GM12878 (cell line): ENCODE measurements at regions of chr7 and their contacts with region 1.

Region 1: GRCh38 chr7:137656227-137656849 is 190.4 kb downstream of the DGKI start:
- DNase-seq: peak; percentile 20
- ATAC-seq: peak; percentile 90
- H3K4me3 ChIP-seq: no peak overlapping the region
- H3K27ac ChIP-seq: no peak overlapping the region
- H3K4me1 ChIP-seq: no peaks in the 10 kb centered on the region
- H3K27me3 ChIP-seq: no peaks in the 10 kb centered on the region
- CTCF ChIP-seq: peak; percentile 74 to 86 (median 83)
- EP300 ChIP-seq: no peak
- POLR2A ChIP-seq: no peak
- RAD21 ChIP-seq: peak; percentile 96

Region 2: GRCh38 chr7:137235434-137235833 is 420.9 kb before region 1 on chr7:
- CTCF ChIA-PET with region 1: no interaction called
- POLR2A ChIA-PET with region 1: no interaction called
- RAD21 ChIA-PET with region 1: no interaction called
- SMC1A ChIA-PET with region 1: no interaction called
- in situ Hi-C with region 1: no loop called
- intact Hi-C with region 1: no loop called
- DNase-seq: no peak
- ATAC-seq: peak; percentile 40
- H3K4me3 ChIP-seq: no peak overlapping the region
- H3K27ac ChIP-seq: no peak overlapping the region
- H3K4me1 ChIP-seq: no peaks in the 10 kb centered on the region
- H3K27me3 ChIP-seq: no peaks in the 10 kb centered on the region
- CTCF ChIP-seq: no peak
- EP300 ChIP-seq: no peak
- POLR2A ChIP-seq: no peak
- RAD21 ChIP-seq: no peak

Region 3: DNA sequence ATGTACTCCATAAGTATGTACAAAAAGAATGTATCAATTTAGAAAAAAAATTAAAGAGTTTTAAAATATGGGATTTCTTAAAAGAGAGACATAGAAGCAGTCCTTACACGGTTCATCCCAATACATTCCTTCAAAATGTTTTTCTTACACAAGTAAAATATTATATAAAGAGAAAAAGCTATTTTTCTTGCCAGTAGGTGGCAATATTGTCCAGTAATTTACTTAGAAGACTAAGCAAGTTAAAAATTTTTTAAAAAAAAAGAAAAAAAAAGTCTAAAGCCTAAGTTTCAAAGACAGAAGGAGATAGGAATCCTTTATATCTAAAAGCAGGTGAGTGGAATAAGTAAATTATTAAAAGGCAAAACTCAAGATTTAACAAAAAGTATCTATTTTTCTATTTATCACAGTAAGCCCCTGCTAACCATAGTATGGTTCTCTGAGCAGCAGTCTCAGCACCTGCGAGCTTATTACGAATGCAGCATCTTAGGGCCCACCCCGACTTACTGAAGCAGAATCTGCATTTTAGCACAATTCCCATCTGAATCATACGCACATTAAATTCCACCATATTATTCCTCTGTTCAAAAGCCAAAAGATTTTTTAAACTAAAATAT is 50.2 kb before region 1 on chr7:
- CTCF ChIA-PET with region 1: interaction called, 35 read pairs
- POLR2A ChIA-PET with region 1: no interaction called
- RAD21 ChIA-PET with region 1: interaction called, 7 read pairs
- SMC1A ChIA-PET with region 1: interaction called, 22 read pairs
- in situ Hi-C with region 1: no loop called
- intact Hi-C with region 1: no loop called
- DNase-seq: no peak
- ATAC-seq: peak; percentile 51; the same call in 1 of the 3 replicates
- H3K4me3 ChIP-seq: no peak overlapping the region
- H3K27ac ChIP-seq: no peak overlapping the region
- H3K4me1 ChIP-seq: no peaks in the 10 kb centered on the region
- H3K27me3 ChIP-seq: no peaks in the 10 kb centered on the region
- CTCF ChIP-seq: peak in 1 of 3 experiments; percentile 29; a peak in 2 of 6 replicates
- EP300 ChIP-seq: no peak
- POLR2A ChIP-seq: no peak
- RAD21 ChIP-seq: no peak

Region 4: GRCh38 chr7:137694405-137694804 is 38.1 kb after region 1 on chr7:
- CTCF ChIA-PET with region 1: interaction called, 12 read pairs
- POLR2A ChIA-PET with region 1: no interaction called
- RAD21 ChIA-PET with region 1: interaction called, 15 read pairs
- SMC1A ChIA-PET with region 1: interaction called, 19 read pairs
- in situ Hi-C with region 1: no loop called
- intact Hi-C with region 1: no loop called
- DNase-seq: peak; percentile 17
- ATAC-seq: peak; percentile 91
- H3K4me3 ChIP-seq: no peak overlapping the region
- H3K27ac ChIP-seq: no peak overlapping the region
- H3K4me1 ChIP-seq: no peaks in the 10 kb centered on the region
- H3K27me3 ChIP-seq: no peaks in the 10 kb centered on the region
- CTCF ChIP-seq: no peak
- EP300 ChIP-seq: peak in 1 of 2 experiments; percentile 12; a peak in 1 of 4 replicates
- POLR2A ChIP-seq: no peak
- RAD21 ChIP-seq: no peak

Region 5: DNA sequence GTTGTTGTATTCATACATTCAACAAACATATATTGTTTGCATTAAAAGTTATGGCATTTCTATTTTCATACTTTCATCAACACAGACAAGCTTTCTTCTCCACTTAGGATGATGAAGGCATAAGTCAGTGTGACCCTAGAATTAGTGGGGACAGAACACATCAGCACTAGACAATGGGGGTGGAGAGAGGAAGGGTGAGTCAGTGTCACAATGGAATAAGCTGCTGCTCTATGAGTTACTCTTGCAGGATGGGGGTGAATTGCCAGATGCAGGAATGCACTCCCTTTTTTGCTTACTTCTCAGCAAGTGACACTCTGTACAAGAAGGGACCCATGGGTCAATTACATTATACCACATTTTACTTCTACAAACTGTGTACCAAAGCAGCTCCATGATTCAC is 116.4 kb after region 1 on chr7:
- CTCF ChIA-PET with region 1: interaction called, 14 read pairs
- POLR2A ChIA-PET with region 1: interaction called, 6 read pairs
- RAD21 ChIA-PET with region 1: interaction called, 17 read pairs
- SMC1A ChIA-PET with region 1: interaction called, 34 read pairs
- in situ Hi-C with region 1: no loop called
- intact Hi-C with region 1: no loop called
- DNase-seq: no peak
- ATAC-seq: peak; percentile 64
- H3K4me3 ChIP-seq: no peak overlapping the region
- H3K27ac ChIP-seq: no peak overlapping the region
- H3K4me1 ChIP-seq: no peaks in the 10 kb centered on the region
- H3K27me3 ChIP-seq: no peaks in the 10 kb centered on the region
- CTCF ChIP-seq: no peak
- EP300 ChIP-seq: no peak
- POLR2A ChIP-seq: no peak
- RAD21 ChIP-seq: no peak

Region 6: DNA sequence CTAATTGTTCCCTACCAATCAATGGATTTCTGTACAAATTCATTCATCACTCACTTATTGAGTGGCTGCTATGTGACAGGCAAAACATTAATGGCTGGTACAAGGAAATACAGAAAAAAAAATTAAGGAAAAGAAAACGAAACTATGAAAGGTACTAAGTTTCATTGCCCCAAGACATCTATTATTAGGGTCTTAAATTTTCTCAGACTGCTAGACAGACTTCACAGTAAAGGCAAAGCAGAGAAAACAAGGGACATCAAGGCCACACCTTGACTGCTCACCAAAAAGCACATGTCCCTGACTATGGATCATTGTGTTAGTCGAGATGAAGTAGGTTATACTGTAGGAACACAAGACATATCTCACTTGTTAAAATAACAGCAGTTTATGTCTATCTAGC is 153.9 kb after region 1 on chr7:
- CTCF ChIA-PET with region 1: interaction called, 64 read pairs
- POLR2A ChIA-PET with region 1: no interaction called
- RAD21 ChIA-PET with region 1: interaction called, 20 read pairs
- SMC1A ChIA-PET with region 1: interaction called, 73 read pairs
- in situ Hi-C with region 1: no loop called
- intact Hi-C with region 1: no loop called
- DNase-seq: no peak
- ATAC-seq: peak; percentile 31
- H3K4me3 ChIP-seq: no peak overlapping the region
- H3K27ac ChIP-seq: no peak overlapping the region
- H3K4me1 ChIP-seq: peaks cover 3% of the 10 kb centered on the region; the same call in 1 of the 2 replicates
- H3K27me3 ChIP-seq: no peaks in the 10 kb centered on the region
- CTCF ChIP-seq: no peak
- EP300 ChIP-seq: no peak
- POLR2A ChIP-seq: no peak
- RAD21 ChIP-seq: no peak

Region 7: GRCh38 chr7:137871170-137871915 is 215.0 kb after region 1 on chr7:
- CTCF ChIA-PET with region 1: interaction called, 7 read pairs
- POLR2A ChIA-PET with region 1: no interaction called
- RAD21 ChIA-PET with region 1: no interaction called
- SMC1A ChIA-PET with region 1: interaction called, 10 read pairs
- in situ Hi-C with region 1: no loop called
- intact Hi-C with region 1: no loop called
- DNase-seq: no peak
- ATAC-seq: no peak
- H3K4me3 ChIP-seq: no peak overlapping the region
- H3K27ac ChIP-seq: no peak overlapping the region
- H3K4me1 ChIP-seq: no peaks in the 10 kb centered on the region
- H3K27me3 ChIP-seq: no peaks in the 10 kb centered on the region
- CTCF ChIP-seq: no peak
- EP300 ChIP-seq: no peak
- POLR2A ChIP-seq: peak; percentile 40; the same call in 1 of the 2 replicates
- RAD21 ChIP-seq: no peak

Region 8: DNA sequence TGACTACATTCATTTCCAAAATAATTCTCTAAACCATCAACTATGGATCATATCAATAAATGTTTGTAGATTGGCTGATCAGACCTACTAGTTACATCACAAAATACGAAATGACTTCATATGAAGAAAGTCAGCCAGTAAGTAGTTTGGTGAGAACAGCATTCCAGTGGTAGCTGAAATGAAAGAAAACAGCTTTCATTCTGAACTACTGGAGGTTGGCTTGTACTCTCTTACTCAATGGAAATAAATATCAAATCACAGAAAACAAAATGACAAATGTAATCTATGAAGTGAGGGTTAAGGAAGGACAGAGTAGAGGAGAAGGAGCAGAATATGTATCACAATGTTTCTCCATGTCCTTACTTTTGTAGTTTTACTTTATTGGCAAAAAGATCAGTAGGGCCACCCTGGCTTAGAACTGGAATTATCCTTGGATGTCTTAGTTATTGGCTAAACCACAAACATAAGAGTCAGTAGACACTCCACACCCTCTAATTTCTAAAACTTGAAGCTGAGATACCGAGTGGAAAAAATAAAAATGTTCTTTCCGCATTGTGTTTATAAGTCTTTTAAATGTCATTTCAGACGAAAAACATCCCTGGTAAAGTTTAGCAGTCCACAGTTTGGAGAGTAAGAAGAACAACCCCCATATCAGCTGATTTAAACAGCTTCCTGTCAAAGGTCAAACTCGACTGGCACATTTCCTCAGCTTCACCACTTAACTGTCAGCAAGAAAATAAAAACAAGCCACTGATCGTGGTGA is 264.5 kb after region 1 on chr7:
- CTCF ChIA-PET with region 1: interaction called, 10 read pairs
- POLR2A ChIA-PET with region 1: no interaction called
- RAD21 ChIA-PET with region 1: interaction called, 3 read pairs
- SMC1A ChIA-PET with region 1: interaction called, 4 read pairs
- in situ Hi-C with region 1: no loop called
- intact Hi-C with region 1: no loop called
- DNase-seq: no peak
- ATAC-seq: no peak
- H3K4me3 ChIP-seq: no peak overlapping the region
- H3K27ac ChIP-seq: no peak overlapping the region
- H3K4me1 ChIP-seq: peaks cover 30% of the 10 kb centered on the region
- H3K27me3 ChIP-seq: no peaks in the 10 kb centered on the region
- CTCF ChIP-seq: no peak
- EP300 ChIP-seq: no peak
- POLR2A ChIP-seq: no peak
- RAD21 ChIP-seq: no peak